ENCODE measurements at regions of chr17 and their contacts with region 1.

Region 1: DNA sequence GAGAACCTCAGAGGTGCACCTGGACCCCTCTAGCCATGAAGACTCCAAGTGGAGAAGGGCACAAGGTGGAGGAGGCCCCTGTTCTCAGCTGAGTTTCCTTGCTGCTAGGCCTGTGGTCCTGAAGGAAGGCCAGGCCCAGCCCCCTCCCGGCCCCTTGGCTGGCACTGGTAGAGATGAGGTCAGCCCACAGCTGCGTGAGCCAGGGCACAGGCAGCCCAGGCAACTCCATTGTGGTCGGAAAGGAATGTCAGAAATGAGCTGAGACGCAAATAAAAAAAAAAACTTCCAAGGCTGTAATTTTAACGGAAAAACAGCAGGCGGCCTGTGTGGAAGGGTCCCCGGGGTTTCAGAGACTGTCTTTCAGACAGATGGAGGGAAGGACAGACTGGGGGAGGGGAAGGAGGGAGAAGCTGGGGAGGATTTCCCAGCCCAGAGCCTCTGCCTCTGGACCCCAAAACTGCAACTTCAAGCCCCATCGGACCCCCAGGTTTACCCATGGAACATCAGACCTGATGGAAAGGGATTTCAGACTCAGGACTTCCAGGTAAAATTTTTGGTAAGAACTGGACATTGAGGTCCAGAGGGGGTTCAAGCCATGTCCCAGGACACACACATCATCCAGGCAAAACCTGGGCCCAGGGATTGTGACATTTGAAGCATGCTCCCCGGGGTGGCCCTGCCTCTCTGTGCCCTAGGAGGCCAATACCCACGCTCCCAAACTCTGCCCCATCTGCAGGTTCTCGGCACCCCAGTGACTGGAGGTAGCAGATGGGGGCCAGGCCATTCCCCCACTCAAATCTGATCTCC is 25.7 kb upstream of the MRPS23 start:
- DNase-seq: peak; percentile 69 to 79 (median 74)
- H3K4me3 ChIP-seq: peak overlapping the region in 3 of 7 experiments; percentile 29 to 45 (median 29)
- H3K27ac ChIP-seq: no peak overlapping the region
- H3K4me1 ChIP-seq: peaks cover 8 to 77% (median 65%) of the 10 kb centered on the region in 4 experiments
- H3K27me3 ChIP-seq: no peaks in the 10 kb centered on the region

Region 2: GRCh38 chr17:57311281-57312216 is 564.0 kb before region 1 on chr17:
- CTCF ChIA-PET with region 1: no interaction called
- POLR2A ChIA-PET with region 1: no interaction called
- DNase-seq: no peak
- H3K4me3 ChIP-seq: peak overlapping the region in 1 of 7 experiments; percentile 28
- H3K27ac ChIP-seq: peak overlapping the region in 1 of 2 experiments; percentile 35
- H3K4me1 ChIP-seq: peaks cover 4 to 59% (median 40%) of the 10 kb centered on the region in 4 experiments
- H3K27me3 ChIP-seq: no peaks in the 10 kb centered on the region

Region 3: DNA sequence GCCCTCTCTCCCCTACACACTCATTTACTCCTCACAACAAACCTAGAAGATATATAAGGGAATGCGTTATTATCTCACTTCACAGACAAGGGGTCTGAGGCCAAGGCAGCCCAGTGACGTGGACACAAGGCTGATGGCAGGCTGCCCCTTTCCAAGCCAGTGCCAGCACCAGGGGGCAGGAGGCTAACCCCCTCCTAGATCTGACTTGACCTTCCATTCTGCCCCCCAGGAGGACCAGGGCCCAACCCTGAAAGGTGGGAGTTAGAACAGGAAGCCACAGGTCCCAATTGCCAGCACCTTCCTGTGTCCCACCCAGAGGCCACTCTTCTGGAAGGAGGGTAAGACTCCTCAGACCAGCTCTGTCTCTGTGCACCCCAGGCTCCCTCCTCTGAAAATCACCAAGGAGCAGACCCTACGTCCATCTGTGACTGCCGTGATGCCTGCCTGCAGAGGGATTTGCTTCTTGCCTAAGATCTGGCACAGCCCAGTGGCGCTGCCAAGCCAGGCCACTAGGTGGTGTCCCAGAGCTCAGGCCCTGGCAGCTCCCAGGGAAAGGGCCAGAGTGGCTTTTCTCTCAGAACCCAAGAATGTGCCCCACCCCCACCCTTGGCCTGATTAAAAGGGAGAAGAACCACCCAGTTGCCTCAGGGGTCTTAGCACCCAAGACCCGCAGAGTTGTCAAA is 16.8 kb after region 1 on chr17:
- CTCF ChIA-PET with region 1: interaction called, 37 read pairs
- POLR2A ChIA-PET with region 1: no interaction called
- DNase-seq: peak; percentile 72 to 83 (median 77)
- H3K4me3 ChIP-seq: peak overlapping the region in 2 of 7 experiments; percentile 31 to 52
- H3K27ac ChIP-seq: peak overlapping the region in 1 of 2 experiments; percentile 69
- H3K4me1 ChIP-seq: peaks cover 0 to 54% (median 43%) of the 10 kb centered on the region in 4 experiments
- H3K27me3 ChIP-seq: no peaks in the 10 kb centered on the region

Region 4: GRCh38 chr17:57902800-57903759 is 27.6 kb after region 1 on chr17:
- CTCF ChIA-PET with region 1: interaction called, 31 read pairs
- POLR2A ChIA-PET with region 1: interaction called, 3 read pairs
- DNase-seq: peak in 2 of 3 donors; percentile 69 to 74
- H3K4me3 ChIP-seq: peak overlapping the region in 4 of 7 experiments; percentile 13 to 30 (median 20)
- H3K27ac ChIP-seq: no peak overlapping the region
- H3K4me1 ChIP-seq: peaks cover 17 to 82% (median 67%) of the 10 kb centered on the region in 4 experiments
- H3K27me3 ChIP-seq: no peaks in the 10 kb centered on the region

Region 5: DNA sequence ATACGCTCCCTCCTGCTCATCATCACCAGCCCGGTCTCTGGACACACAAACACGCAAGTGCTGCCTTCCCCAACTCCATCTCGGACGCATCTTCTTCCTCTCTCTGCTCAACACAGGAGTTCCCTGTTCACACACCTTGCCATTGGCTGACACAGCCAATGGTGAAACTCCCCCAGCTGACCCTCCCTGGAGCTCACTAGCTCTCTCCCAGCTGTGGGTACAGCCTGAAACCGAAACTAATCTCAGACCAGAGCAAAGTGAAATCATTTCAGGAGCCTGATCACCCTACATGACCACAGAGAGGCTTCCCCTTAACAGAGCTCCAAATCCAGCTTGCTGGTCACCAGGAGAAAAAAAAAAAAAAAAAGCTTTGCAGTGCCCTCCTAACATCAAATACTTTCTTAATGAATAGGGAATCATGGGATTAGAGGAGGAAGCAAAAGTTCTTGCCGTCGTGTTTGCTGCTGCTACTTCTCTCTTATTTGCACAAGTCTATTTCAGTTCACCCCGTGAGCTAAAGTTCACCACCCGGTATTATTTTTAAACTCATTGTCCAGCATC is 71.4 kb after region 1 on chr17:
- CTCF ChIA-PET with region 1: interaction called, 12 read pairs
- POLR2A ChIA-PET with region 1: no interaction called
- DNase-seq: peak; percentile 77 to 94 (median 94)
- H3K4me3 ChIP-seq: peak overlapping the region; percentile 28 to 79 (median 60)
- H3K27ac ChIP-seq: no peak overlapping the region
- H3K4me1 ChIP-seq: peaks cover 29 to 59% (median 50%) of the 10 kb centered on the region in 4 experiments
- H3K27me3 ChIP-seq: no peaks in the 10 kb centered on the region